Activated naive CD4-positive, alpha-beta T cell treated with anti-CD3 and anti-CD28 coated beads, Interleukin-2, amount 10 ng/mL, durations not matched to agents 7 days and 5 days (primary cell): ENCODE measurements at regions of chr2 and their contacts with region 1.

Region 1: DNA sequence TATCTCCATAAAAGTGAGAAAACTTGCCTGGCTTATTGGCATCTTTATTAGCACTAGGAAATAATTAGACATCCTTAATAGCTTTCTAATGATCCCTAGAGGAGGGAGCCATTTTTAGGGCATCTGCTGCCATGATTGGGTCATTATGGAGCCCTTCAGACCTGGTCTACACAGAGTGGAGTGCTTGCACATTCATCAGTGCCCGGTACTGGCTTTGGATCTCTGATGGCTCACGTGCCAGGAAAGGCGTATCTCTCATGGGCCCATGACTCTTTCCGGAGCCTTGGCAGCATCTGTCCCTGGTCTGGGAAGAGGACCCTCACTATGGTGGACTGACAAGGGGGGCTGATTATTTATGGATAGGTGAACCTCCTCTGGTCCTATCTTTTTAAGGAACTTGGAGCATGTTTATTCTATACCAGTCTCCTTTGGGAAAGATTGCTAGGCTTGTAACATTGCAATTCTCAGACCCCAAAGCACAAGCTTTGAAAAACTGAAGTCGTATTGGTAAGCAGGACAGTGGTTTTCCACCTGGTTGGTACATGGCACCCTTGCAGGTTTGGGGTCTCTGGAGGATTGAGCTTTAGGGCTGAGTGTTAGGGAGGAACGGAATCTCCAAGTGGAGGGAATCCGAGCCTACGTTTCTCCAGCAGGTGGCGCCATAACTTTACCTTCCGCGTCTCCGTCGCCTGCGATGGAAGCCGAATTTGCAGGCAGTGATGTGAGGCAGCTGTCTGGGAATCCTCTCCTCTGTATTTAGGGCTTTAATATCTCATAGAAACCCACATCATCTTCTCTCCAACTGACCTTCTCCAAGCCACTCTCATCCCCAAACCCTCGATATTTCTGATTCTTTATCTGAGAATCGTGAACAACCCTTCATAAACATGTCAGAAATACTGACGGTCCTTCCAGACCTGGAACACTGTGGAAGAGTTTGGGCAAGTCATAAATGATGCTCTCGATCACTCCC is 27.8 kb downstream of the SIX2 start:
- DNase-seq: peak; percentile 74
- H3K4me3 Mint-ChIP-seq: no peak overlapping the region
- H3K27ac Mint-ChIP-seq: no peak overlapping the region
- H3K4me1 Mint-ChIP-seq: no peaks in the 10 kb centered on the region
- H3K27me3 Mint-ChIP-seq: peaks cover 25% of the 10 kb centered on the region

Region 2: DNA sequence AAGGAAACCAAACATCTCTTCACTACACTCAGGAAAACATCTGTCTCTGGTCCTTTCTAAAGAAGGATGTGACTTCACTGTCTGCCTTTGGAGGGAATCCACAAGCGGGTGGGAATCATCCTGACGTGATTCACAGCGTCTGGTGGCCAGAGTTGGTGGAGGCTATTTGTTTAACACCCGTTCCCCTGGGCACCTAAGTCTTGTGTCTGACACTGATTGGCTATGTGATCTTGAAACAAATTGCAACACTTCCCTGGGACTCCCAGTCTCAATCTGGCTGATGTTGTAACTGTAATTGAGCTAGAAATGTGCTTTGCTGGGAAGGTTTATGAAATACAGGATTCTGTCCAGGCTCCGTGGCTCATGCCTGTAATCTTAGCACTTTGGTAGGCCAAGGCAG is 68.8 kb before region 1 on chr2:
- CTCF ChIA-PET with region 1: no interaction called
- DNase-seq: no peak
- H3K4me3 Mint-ChIP-seq: no peak overlapping the region
- H3K27ac Mint-ChIP-seq: no peak overlapping the region
- H3K4me1 Mint-ChIP-seq: no peaks in the 10 kb centered on the region
- H3K27me3 Mint-ChIP-seq: peaks cover 21% of the 10 kb centered on the region

Region 3: GRCh38 chr2:44971148-44971450 is 10.3 kb before region 1 on chr2:
- CTCF ChIA-PET with region 1: interaction called, 24 read pairs
- DNase-seq: no peak
- H3K4me3 Mint-ChIP-seq: no peak overlapping the region
- H3K27ac Mint-ChIP-seq: no peak overlapping the region
- H3K4me1 Mint-ChIP-seq: no peaks in the 10 kb centered on the region
- H3K27me3 Mint-ChIP-seq: peaks cover 17% of the 10 kb centered on the region

Region 4: GRCh38 chr2:45014016-45014702 is 32.7 kb after region 1 on chr2:
- CTCF ChIA-PET with region 1: interaction called, 11 read pairs
- DNase-seq: peak; percentile 49
- H3K4me3 Mint-ChIP-seq: no peak overlapping the region
- H3K27ac Mint-ChIP-seq: peak overlapping the region; percentile 66
- H3K4me1 Mint-ChIP-seq: peaks cover 11% of the 10 kb centered on the region
- H3K27me3 Mint-ChIP-seq: peaks cover 96% of the 10 kb centered on the region

Region 5: DNA sequence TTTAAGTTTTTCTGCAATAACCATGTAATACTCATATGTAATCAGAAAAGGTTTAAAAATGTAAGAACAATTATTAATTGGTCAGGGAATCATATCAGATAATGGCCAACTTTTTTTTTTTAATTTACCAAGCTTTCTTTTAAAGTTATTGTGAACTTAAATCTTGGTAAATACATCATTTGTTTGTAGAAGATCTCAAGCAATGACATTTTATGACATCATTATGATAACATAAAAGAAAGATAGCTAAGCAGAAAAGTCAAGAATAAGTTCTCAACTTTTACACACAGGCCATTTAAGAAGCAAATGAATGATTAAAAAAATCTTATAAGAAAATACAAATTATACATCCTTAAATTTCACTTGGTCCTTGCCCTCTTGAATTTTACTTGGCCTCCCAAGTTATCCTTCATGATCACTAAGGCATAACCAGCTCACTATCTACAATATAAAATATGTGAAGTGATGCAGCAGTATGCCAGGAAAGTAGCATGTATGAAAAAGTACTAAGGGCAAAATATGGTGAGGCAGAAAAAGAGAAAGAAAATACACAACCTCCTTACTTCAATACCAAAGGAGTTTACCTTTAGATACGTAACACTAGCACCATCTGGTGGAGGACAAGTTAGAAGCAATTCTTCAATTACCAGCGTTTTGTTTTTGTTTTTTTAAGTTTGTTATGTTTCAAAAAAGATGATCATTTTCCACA is 513.0 kb after region 1 on chr2:
- CTCF ChIA-PET with region 1: interaction called, 30 read pairs
- DNase-seq: no peak
- H3K4me3 Mint-ChIP-seq: no peak overlapping the region
- H3K27ac Mint-ChIP-seq: no peak overlapping the region
- H3K4me1 Mint-ChIP-seq: peaks cover 8% of the 10 kb centered on the region
- H3K27me3 Mint-ChIP-seq: no peaks in the 10 kb centered on the region

Region 6: GRCh38 chr2:45578056-45578809 is 596.8 kb after region 1 on chr2:
- CTCF ChIA-PET with region 1: interaction called, 40 read pairs
- DNase-seq: peak; percentile 48
- H3K4me3 Mint-ChIP-seq: no peak overlapping the region
- H3K27ac Mint-ChIP-seq: no peak overlapping the region
- H3K4me1 Mint-ChIP-seq: peaks cover 5% of the 10 kb centered on the region
- H3K27me3 Mint-ChIP-seq: no peaks in the 10 kb centered on the region